Activated CD4-positive, alpha-beta memory T cell treated with anti-CD3 and anti-CD28 coated beads for 36 hours (primary cell): ENCODE measurements at regions of chr2 and their contacts with region 1.

Region 1: GRCh38 chr2:6826081-6826913 is 39.4 kb downstream of the CMPK2 start:
- DNase-seq: peak; percentile 73
- H3K4me3 Mint-ChIP-seq: no peak overlapping the region
- H3K27ac Mint-ChIP-seq: no peak overlapping the region
- H3K4me1 Mint-ChIP-seq: peaks cover 7% of the 10 kb centered on the region
- H3K27me3 Mint-ChIP-seq: no peaks in the 10 kb centered on the region

Region 2: DNA sequence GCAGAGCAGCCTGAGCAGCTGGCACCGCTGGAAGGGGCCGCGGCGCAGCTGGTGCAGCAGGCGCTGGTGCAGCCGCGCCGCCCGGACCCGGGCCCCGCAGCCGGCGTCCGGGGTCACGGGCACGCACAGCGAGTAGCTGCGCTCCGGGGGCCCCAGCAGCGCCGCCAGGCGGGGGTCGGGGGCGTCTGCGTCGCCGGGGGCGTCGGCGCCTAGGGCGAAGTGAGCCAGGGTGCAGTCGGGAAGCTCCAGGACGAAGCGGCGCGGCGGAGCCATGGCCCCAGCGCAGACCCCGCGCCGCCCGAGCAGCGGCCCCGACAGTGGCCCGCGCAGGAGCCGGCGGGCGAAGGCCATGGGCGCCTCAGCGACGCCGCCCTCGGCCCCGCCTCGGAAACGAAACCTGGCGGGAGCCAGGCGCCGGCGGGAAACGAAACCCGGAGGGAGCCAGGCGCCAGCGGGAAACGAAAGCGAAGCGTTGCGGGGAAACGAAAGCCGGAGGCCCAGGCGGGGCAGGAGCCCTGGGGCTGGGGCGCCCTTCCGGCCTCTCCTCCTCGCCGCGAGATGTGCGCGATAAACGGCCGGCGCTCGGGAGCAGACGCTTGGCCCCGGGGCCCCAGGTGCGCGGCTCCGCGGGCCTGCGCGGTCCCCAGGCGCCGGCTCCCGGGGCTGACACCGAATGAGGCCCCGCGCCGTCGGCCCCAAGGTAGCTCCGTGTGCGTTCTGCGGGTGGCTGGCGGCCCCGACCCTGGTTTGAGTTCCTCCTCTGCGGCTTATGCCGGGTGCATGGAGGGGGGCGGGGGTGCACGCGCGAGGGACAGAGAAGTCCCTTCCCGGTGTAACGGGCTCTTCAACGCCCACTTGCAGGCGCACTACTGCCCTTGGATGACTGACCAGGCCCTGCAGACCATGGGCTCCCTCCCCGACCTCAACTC is 39.3 kb after region 1 on chr2 and contains the start of gene CMPK2:
- CTCF ChIA-PET with region 1: interaction called, 7 read pairs
- POLR2A ChIA-PET with region 1: no interaction called
- intact Hi-C with region 1: loop called (anchors 1 kb)
- DNase-seq: peak; percentile 84
- H3K4me3 Mint-ChIP-seq: peak within 1 kb of the TSS; percentile 92
- H3K27ac Mint-ChIP-seq: peak within 1 kb of the TSS; percentile 85
- H3K4me1 Mint-ChIP-seq: peaks cover 7% of the 10 kb centered on the region
- H3K27me3 Mint-ChIP-seq: peaks cover 2% of the 10 kb centered on the region
- total RNA-seq, gene CMPK2: 6.6 to 6.8 TPM

Region 3: DNA sequence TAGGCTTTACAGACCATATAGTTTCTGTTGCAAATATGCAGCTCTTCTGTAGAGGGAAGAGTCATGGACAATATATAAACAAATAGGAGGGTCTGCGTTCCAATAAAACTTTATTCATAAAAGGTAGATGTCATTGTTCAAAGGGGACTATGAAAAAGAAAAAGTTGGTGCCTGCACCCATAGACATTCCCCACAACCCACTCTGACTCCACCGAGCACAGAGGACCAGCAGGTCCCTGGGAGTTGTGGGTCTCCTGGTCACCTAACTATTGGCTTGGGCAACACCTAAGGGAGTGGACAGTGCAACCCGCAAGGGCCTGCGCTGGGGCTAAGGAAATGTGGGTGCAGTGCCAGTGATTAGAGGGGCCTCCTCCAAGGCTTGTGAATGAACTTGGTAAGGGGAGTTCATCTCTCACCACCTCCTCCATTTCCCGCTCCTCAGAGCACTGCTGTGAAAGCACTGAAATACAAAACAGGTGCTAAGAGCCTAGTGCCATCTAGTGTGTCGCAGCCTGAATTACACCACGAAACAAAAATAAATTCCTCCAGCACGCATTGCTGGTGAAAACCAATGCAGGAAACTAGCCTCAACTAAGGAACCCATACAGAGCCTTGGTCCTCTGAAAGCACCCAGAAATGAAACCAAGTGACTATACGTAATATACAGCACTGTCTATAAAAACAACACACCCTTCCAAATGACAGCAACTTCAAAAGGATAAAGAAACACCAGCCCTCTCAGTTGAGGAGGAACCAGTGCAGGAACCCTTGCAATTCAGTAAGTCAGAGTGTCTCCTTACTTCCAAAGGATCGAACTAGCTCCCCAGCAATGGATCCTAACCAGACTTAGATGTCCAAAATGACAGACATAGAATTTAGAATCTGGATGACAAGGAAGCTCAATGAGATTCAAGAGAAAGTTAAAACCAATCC is 257.5 kb after region 1 on chr2:
- CTCF ChIA-PET with region 1: interaction called, 3 read pairs
- POLR2A ChIA-PET with region 1: no interaction called
- intact Hi-C with region 1: loop called (anchors 2 kb)
- DNase-seq: peak; percentile 24
- H3K4me3 Mint-ChIP-seq: no peak overlapping the region
- H3K27ac Mint-ChIP-seq: no peak overlapping the region
- H3K4me1 Mint-ChIP-seq: peaks cover 4% of the 10 kb centered on the region
- H3K27me3 Mint-ChIP-seq: no peaks in the 10 kb centered on the region